ENCODE measurements at regions of chr1 and their contacts with region 1.

Region 1: DNA sequence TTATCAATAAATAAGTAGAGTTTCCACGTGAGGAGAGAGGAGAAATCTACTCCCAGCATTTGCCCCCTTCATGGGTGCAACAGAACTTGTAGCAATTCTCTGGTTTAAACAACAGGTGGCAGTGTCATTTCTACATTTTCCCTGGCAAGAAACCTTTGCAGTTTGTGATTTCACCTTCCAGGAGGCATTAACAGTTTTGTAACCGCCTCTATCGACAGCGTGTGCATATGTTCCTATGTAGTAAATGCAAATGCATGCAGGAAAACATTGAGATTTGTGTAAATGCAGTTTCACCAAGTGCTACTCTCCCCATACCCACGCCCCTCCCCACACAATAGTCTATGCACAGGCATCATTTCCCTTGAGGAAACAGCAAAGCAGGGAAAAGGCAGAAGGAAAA is 494.7 kb downstream of the SMYD3 start:
- DNase-seq: peak; percentile 34
- ATAC-seq: peak; percentile 67
- H3K4me3 ChIP-seq: no peak overlapping the region
- H3K27ac ChIP-seq: no peak overlapping the region
- H3K4me1 ChIP-seq: peaks cover 11% of the 10 kb centered on the region
- H3K27me3 ChIP-seq: no peaks in the 10 kb centered on the region
- CTCF ChIP-seq: peak; percentile 69
- EP300 ChIP-seq: no peak
- POLR2A ChIP-seq: no peak
- RAD21 ChIP-seq: peak; percentile 52; the same call in 1 of the 2 replicates

Region 2: DNA sequence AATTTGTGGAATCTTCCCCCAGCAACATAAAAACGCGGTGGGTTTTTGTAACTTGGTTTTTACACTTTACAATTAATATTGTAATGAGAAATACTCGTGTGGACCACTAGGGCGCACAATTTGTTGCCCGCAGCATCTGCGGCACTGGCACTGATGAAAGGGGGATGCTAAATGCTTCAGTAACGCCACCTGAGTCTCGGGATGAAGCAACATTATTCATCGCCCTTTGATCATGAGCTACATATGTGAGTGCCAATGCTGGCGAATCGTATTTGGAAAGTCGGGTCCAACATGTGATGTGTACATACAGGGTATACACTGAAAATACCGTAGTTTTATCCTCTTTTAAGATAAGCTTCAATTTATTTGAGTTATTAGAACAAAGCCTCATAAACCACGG is 1211.1 kb before region 1 on chr1:
- CTCF ChIA-PET with region 1: no interaction called
- POLR2A ChIA-PET with region 1: no interaction called
- in situ Hi-C with region 1: no loop called
- intact Hi-C with region 1: no loop called
- DNase-seq: peak; percentile 87
- ATAC-seq: peak; percentile 94
- H3K4me3 ChIP-seq: 0 out of 6 replicates have a peak overlapping the region, but pooled peaks of 1 of the 3 experiments have one; percentile 24
- H3K27ac ChIP-seq: no peak overlapping the region
- H3K4me1 ChIP-seq: peaks cover 31% of the 10 kb centered on the region
- H3K27me3 ChIP-seq: no peaks in the 10 kb centered on the region
- CTCF ChIP-seq: peak; percentile 81
- EP300 ChIP-seq: peak in 1 of 2 experiments; percentile 31; a peak in 1 of 4 replicates
- POLR2A ChIP-seq: no peak
- RAD21 ChIP-seq: peak; percentile 64; the same call in 1 of the 2 replicates

Region 3: GRCh38 chr1:245687594-245688535 is 324.5 kb before region 1 on chr1:
- CTCF ChIA-PET with region 1: no interaction called
- POLR2A ChIA-PET with region 1: no interaction called
- in situ Hi-C with region 1: no loop called
- intact Hi-C with region 1: no loop called
- DNase-seq: no peak
- ATAC-seq: peak; percentile 32; the same call in 2 of the 3 replicates
- H3K4me3 ChIP-seq: no peak overlapping the region
- H3K27ac ChIP-seq: no peak overlapping the region
- H3K4me1 ChIP-seq: no peaks in the 10 kb centered on the region
- H3K27me3 ChIP-seq: no peaks in the 10 kb centered on the region
- CTCF ChIP-seq: peak; percentile 39; the same call in 1 of the 2 replicates
- EP300 ChIP-seq: no peak
- POLR2A ChIP-seq: no peak
- RAD21 ChIP-seq: no peak

Region 4: DNA sequence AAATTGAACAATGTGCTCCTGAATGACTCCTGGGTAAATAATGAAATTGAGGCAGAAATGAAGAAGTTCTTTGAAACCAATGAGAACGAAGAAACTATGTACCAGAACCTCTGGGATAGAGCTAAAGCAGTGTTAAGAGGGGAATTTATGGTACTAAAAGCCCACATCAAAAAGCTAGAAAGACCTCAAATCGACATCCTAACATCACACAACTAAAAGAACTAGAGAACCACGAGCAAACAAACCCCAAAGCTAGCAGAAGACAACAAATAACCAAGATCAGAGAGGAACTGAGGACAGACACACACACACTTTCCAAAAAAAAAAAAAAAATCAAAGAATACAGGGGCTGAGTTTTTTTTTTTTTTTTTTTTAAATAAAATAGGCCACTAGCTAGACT is 69.5 kb before region 1 on chr1:
- CTCF ChIA-PET with region 1: no interaction called
- POLR2A ChIA-PET with region 1: no interaction called
- in situ Hi-C with region 1: no loop called
- intact Hi-C with region 1: no loop called
- DNase-seq: no peak
- ATAC-seq: no peak
- H3K4me3 ChIP-seq: no peak overlapping the region
- H3K27ac ChIP-seq: no peak overlapping the region
- H3K4me1 ChIP-seq: peaks cover 16% of the 10 kb centered on the region
- H3K27me3 ChIP-seq: no peaks in the 10 kb centered on the region
- CTCF ChIP-seq: no peak
- EP300 ChIP-seq: no peak
- POLR2A ChIP-seq: no peak
- RAD21 ChIP-seq: no peak

Region 5: DNA sequence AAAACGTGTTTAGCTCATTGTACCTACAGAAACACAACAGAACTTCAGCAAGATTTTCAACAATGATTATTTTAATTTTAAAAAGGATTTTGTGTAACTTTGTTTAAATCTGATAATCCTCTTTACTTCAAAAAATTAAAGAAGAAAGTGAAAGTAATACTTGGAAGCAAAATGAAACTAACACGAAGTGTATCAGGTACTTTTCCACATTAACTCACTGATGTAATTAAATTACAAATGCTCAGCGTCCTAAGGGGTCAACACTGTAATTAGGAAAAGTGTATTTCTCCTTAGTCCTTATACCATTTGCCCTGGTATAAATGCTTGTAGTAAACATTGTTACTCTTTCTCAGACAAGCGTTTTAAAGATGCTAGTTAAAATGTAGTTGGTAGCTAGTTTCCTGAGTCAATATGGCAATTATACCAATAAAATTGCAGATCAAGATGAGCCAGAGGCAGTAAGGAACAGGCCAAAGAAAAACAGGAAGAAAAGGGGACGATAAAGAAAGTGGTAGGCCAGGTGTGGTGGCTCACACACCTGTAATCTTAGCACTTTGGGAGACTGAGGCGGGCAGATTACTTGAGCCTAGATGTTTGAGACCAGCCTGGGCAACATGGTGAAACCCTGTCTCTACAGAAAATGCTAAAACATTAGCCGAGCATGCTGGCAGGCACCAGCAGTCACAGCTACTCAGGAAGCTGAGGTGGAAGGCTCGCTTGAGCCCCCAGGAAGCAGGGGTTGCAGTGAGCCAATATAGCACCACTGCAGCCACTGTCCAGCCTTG is 58.3 kb before region 1 on chr1:
- CTCF ChIA-PET with region 1: no interaction called
- POLR2A ChIA-PET with region 1: no interaction called
- in situ Hi-C with region 1: no loop called
- intact Hi-C with region 1: no loop called
- DNase-seq: no peak
- ATAC-seq: no peak
- H3K4me3 ChIP-seq: no peak overlapping the region
- H3K27ac ChIP-seq: no peak overlapping the region
- H3K4me1 ChIP-seq: no peaks in the 10 kb centered on the region
- H3K27me3 ChIP-seq: no peaks in the 10 kb centered on the region
- CTCF ChIP-seq: no peak
- EP300 ChIP-seq: no peak
- POLR2A ChIP-seq: no peak
- RAD21 ChIP-seq: no peak

Region 6: DNA sequence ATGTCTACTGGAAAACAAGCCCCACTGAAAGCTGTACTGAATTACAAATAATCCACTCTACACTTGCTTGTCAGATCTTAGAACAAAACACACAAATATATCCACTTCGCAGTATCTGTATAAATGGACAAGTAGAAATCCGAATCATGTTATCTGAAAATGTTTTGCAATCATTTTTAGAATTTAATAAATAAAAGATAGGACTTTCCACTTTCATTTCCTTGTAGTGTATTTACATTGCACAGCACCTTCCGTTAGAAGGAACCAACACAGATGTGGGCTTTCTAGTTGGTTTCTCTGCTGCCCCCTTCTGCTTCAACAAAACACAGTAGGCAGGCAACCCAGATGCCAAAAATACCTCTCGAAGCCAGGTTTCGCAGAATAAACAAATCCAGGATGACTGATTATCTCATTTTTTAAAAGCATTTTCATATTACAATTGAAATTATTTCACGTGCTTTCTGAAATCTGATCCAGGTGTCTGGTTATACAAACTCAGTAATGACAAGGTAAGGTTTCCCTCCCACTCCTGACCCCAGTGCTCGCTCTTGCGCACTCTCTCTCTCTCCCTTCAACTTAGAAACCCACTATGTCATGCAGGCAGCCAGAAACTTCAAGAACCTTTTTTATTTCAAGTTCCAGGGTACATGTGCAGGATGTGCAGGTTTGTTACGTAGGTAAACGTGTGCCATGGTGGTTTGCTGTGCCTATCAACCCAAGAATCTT is 104.9 kb after region 1 on chr1:
- CTCF ChIA-PET with region 1: interaction called, 3 read pairs
- POLR2A ChIA-PET with region 1: no interaction called
- in situ Hi-C with region 1: no loop called
- intact Hi-C with region 1: loop called (anchors 1 kb)
- DNase-seq: peak; percentile 8
- ATAC-seq: peak; percentile 86
- H3K4me3 ChIP-seq: no peak overlapping the region
- H3K27ac ChIP-seq: no peak overlapping the region
- H3K4me1 ChIP-seq: peaks cover 3% of the 10 kb centered on the region
- H3K27me3 ChIP-seq: no peaks in the 10 kb centered on the region
- CTCF ChIP-seq: peak; percentile 60
- EP300 ChIP-seq: no peak
- POLR2A ChIP-seq: no peak
- RAD21 ChIP-seq: no peak

Region 7: GRCh38 chr1:246261639-246262038 is 249.3 kb after region 1 on chr1:
- CTCF ChIA-PET with region 1: no interaction called
- POLR2A ChIA-PET with region 1: no interaction called
- in situ Hi-C with region 1: no loop called
- intact Hi-C with region 1: loop called (anchors 5 kb)
- DNase-seq: no peak
- ATAC-seq: no peak
- H3K4me3 ChIP-seq: no peak overlapping the region
- H3K27ac ChIP-seq: no peak overlapping the region
- H3K4me1 ChIP-seq: no peaks in the 10 kb centered on the region
- H3K27me3 ChIP-seq: no peaks in the 10 kb centered on the region
- CTCF ChIP-seq: peak; percentile 41; the same call in 1 of the 2 replicates
- EP300 ChIP-seq: no peak
- POLR2A ChIP-seq: no peak
- RAD21 ChIP-seq: no peak

Region 8: DNA sequence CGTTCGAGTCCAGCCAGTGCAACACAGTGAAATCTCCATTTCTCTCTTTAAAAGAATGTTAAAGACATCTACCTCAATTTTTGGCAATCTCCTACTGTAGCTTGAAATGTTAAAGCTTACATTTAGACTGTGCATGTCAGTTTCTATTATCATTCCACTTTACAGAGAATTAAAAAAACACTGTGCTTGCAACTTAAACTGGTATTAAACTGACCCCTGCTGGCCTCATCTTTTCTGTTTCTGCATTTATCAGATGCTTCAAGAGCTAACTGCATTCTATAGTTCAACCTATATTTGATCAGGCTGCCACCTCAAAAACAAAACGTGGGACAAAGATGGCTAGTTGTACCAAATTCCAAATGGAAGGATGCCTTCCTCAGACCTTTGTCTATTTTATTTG is 268.2 kb after region 1 on chr1:
- CTCF ChIA-PET with region 1: no interaction called
- POLR2A ChIA-PET with region 1: no interaction called
- in situ Hi-C with region 1: loop called (anchors 10 kb)
- intact Hi-C with region 1: loop called (anchors 1 kb)
- DNase-seq: peak; percentile 12
- ATAC-seq: peak; percentile 41; the same call in 1 of the 3 replicates
- H3K4me3 ChIP-seq: no peak overlapping the region
- H3K27ac ChIP-seq: no peak overlapping the region
- H3K4me1 ChIP-seq: peaks cover 14% of the 10 kb centered on the region
- H3K27me3 ChIP-seq: no peaks in the 10 kb centered on the region
- CTCF ChIP-seq: peak; percentile 43
- EP300 ChIP-seq: no peak
- POLR2A ChIP-seq: no peak
- RAD21 ChIP-seq: no peak

Region 9: GRCh38 chr1:246450611-246451251 is 438.4 kb after region 1 on chr1:
- CTCF ChIA-PET with region 1: interaction called, 18 read pairs
- POLR2A ChIA-PET with region 1: no interaction called
- in situ Hi-C with region 1: loop called (anchors 5 kb)
- intact Hi-C with region 1: loop called (anchors 1 kb)
- DNase-seq: peak; percentile 5
- ATAC-seq: no peak; the same call in 1 of the 3 replicates
- H3K4me3 ChIP-seq: no peak overlapping the region
- H3K27ac ChIP-seq: no peak overlapping the region
- H3K4me1 ChIP-seq: no peaks in the 10 kb centered on the region
- H3K27me3 ChIP-seq: no peaks in the 10 kb centered on the region
- CTCF ChIP-seq: peak; percentile 65
- EP300 ChIP-seq: no peak
- POLR2A ChIP-seq: no peak
- RAD21 ChIP-seq: no peak; the same call in 1 of the 2 replicates

Region 10: DNA sequence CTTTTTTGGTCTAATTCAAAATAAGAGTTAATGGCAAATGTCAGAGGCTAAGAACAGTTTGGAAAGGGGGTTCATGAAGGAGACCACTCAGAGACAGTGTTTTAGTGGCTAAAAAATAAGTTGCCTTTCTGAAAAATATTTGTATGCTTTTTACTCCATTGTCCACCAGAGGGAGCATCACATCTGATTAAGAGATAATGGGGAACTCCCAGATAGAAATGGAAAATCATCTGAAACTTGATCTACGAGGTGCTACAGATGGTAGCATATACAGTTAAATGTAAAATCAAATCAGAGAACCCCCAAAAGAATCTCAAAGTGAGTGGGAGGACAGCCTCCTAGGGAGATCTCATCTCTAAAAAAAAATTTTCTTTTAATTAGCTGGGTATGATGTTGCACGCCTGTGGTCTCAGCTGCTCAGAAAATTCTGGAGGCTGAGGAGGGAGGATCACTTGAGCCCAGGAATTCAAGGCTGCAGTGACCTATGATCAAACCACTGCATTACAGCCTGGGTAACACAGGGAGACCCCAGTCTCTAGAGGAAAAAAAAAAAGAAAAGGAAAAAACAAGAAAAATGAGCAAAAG is 485.1 kb after region 1 on chr1:
- CTCF ChIA-PET with region 1: interaction called, 10 read pairs
- POLR2A ChIA-PET with region 1: no interaction called
- in situ Hi-C with region 1: no loop called
- intact Hi-C with region 1: loop called (anchors 1 kb)
- DNase-seq: peak; percentile 72
- ATAC-seq: peak; percentile 23; the same call in 1 of the 3 replicates
- H3K4me3 ChIP-seq: no peak overlapping the region
- H3K27ac ChIP-seq: no peak overlapping the region
- H3K4me1 ChIP-seq: no peaks in the 10 kb centered on the region
- H3K27me3 ChIP-seq: no peaks in the 10 kb centered on the region
- CTCF ChIP-seq: peak; percentile 65
- EP300 ChIP-seq: no peak
- POLR2A ChIP-seq: no peak
- RAD21 ChIP-seq: 0 out of 2 replicates have a peak, but pooled peaks have one; percentile 26